A549 (cell line): ENCODE measurements at regions of chr12 and their contacts with region 1.

Region 1: GRCh38 chr12:122752464-122753318 is at the start of gene DENR:
- DNase-seq: peak; percentile 98
- ATAC-seq: peak; percentile 93 to 97
- H3K4me3 ChIP-seq: peak within 1 kb of the TSS; percentile 80
- H3K27ac ChIP-seq: peak within 1 kb of the TSS; percentile 89 to 92
- H3K4me1 ChIP-seq: peaks cover 25% of the 10 kb centered on the region
- CTCF ChIP-seq: peak; percentile 91
- EP300 ChIP-seq: no peak
- POLR2A ChIP-seq: peak; percentile 80
- RAD21 ChIP-seq: peak; percentile 94 to 99
- polyA plus RNA-seq, gene DENR: 65.7 and 98.2 TPM in 2 replicates

Region 2: DNA sequence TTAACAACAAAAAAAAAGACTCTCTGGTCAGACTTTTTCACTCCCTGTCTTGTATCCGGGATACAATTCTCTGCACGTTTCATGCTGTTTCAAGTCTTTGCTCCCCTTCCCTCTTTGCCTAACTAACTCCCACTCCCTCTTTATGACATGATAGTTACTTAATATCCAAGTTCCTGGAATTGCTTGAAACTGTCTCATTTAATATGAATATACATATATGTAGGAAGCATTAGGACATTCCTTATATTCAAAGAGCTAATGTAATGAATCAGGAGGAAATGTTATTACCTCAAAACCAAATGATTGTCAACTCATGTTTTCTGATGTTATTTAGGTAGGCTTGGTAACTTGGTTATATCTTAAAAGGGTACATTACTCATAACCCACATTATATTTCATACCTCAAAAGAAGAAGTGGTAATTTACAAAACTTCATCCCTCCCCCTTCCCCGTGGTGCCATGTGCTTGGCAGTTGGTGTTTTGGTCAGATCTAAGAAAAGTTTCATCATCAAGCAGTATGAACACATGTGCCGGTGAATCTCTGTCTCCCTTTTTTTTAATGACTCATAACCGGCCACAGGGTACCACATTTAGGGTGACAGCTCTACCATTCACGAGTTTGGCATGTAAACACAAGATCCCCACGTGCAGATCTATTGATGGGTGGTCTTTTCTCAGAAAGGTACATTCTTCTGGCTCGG is 106.0 kb before region 1 on chr12:
- CTCF ChIA-PET with region 1: interaction called, 143 read pairs
- POLR2A ChIA-PET with region 1: interaction called, 7 read pairs
- DNase-seq: peak in 1 of 2 experiments; percentile 24
- ATAC-seq: peak; percentile 37 to 73; a peak in 3 of 6 replicates
- H3K4me3 ChIP-seq: no peak overlapping the region
- H3K27ac ChIP-seq: peak overlapping the region in 1 of 2 experiments; percentile 62; a peak in 3 of 6 replicates
- H3K4me1 ChIP-seq: peaks cover 6% of the 10 kb centered on the region; the same call in 2 of the 3 replicates
- CTCF ChIP-seq: no peak
- EP300 ChIP-seq: no peak
- POLR2A ChIP-seq: no peak
- RAD21 ChIP-seq: no peak

Region 3: GRCh38 chr12:122659519-122659918 is 93.2 kb before region 1 on chr12:
- CTCF ChIA-PET with region 1: interaction called, 11 read pairs
- POLR2A ChIA-PET with region 1: interaction called, 3 read pairs
- DNase-seq: no peak
- ATAC-seq: no peak; a peak in 1 of 6 replicates
- H3K4me3 ChIP-seq: no peak overlapping the region
- H3K27ac ChIP-seq: 0 out of 6 replicates have a peak overlapping the region, but pooled peaks of 1 of the 2 experiments have one; percentile 31
- H3K4me1 ChIP-seq: no peaks in the 10 kb centered on the region
- CTCF ChIP-seq: no peak
- EP300 ChIP-seq: no peak
- POLR2A ChIP-seq: no peak
- RAD21 ChIP-seq: no peak

Region 4: GRCh38 chr12:122681814-122682213 is 70.9 kb before region 1 on chr12:
- CTCF ChIA-PET with region 1: interaction called, 10 read pairs
- POLR2A ChIA-PET with region 1: interaction called, 3 read pairs
- DNase-seq: no peak
- ATAC-seq: peak; percentile 20 to 33; a peak in 2 of 6 replicates
- H3K4me3 ChIP-seq: no peak overlapping the region
- H3K27ac ChIP-seq: peak overlapping the region in 1 of 2 experiments; percentile 69; a peak in 3 of 6 replicates
- H3K4me1 ChIP-seq: peaks cover 28% of the 10 kb centered on the region
- CTCF ChIP-seq: no peak
- EP300 ChIP-seq: no peak
- POLR2A ChIP-seq: no peak
- RAD21 ChIP-seq: no peak

Region 5: GRCh38 chr12:122740351-122740750 is 12.3 kb before region 1 on chr12:
- CTCF ChIA-PET with region 1: interaction called, 11 read pairs
- POLR2A ChIA-PET with region 1: no interaction called
- DNase-seq: peak in 1 of 2 experiments; percentile 45
- ATAC-seq: no peak
- H3K4me3 ChIP-seq: no peak overlapping the region
- H3K27ac ChIP-seq: no peak overlapping the region
- H3K4me1 ChIP-seq: no peaks in the 10 kb centered on the region
- CTCF ChIP-seq: no peak
- EP300 ChIP-seq: no peak
- POLR2A ChIP-seq: no peak
- RAD21 ChIP-seq: no peak

Region 6: DNA sequence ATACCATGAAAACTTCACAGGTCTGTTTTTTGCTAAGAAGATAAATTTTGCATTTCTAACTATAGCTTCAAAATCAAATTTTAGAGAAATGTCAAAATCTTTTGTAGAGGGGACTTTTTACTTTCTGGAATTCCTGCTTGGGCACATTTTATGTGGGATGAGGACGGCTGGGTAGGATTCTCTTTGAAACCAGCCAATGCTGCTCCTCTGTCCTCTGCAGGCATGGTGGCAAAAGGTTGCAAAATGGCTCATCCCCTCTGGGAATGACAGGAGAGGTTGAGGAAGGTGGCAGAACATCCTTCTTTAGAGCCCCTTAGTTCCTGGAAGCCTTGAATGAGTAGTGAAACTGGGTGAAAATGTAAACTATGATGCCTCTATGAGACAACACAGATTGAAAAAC is 15.0 kb after region 1 on chr12:
- CTCF ChIA-PET with region 1: interaction called, 24 read pairs
- POLR2A ChIA-PET with region 1: no interaction called
- DNase-seq: no peak
- ATAC-seq: no peak
- H3K4me3 ChIP-seq: no peak overlapping the region
- H3K27ac ChIP-seq: no peak overlapping the region
- H3K4me1 ChIP-seq: no peaks in the 10 kb centered on the region
- CTCF ChIP-seq: no peak
- EP300 ChIP-seq: no peak
- POLR2A ChIP-seq: no peak
- RAD21 ChIP-seq: no peak